GM13976 (cell line): ENCODE measurements at regions of chr7 and their contacts with region 1.

Region 1: GRCh38 chr7:130010689-130011412 is 40.3 kb downstream of the ZC3HC1 start:
- DNase-seq: peak; percentile 84
- CTCF ChIP-seq: peak; percentile 80

Region 2: DNA sequence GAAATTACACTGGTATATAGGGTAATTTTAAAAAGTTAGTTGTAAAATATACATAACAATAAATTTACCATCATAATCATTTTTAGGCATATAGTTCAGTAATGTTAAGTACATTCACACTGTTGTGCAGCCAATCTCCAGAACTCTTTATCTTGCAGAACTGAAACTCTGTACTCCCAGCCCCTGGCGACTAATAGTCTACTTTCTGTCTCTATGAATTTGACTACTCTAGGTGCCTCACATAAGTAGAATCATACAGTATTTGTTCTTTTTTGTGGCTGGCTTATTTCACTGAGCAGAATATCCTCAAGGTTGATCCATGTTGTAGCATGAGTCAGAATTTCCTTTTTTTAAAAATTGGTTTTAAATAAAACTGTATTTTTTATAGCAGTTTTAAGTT is 357.9 kb before region 1 on chr7:
- in situ Hi-C with region 1: loop called (anchors 10 kb)
- DNase-seq: no peak
- CTCF ChIP-seq: no peak

Region 3: GRCh38 chr7:129684777-129685176 is 326.1 kb before region 1 on chr7:
- in situ Hi-C with region 1: no loop called
- DNase-seq: no peak
- CTCF ChIP-seq: no peak

Region 4: DNA sequence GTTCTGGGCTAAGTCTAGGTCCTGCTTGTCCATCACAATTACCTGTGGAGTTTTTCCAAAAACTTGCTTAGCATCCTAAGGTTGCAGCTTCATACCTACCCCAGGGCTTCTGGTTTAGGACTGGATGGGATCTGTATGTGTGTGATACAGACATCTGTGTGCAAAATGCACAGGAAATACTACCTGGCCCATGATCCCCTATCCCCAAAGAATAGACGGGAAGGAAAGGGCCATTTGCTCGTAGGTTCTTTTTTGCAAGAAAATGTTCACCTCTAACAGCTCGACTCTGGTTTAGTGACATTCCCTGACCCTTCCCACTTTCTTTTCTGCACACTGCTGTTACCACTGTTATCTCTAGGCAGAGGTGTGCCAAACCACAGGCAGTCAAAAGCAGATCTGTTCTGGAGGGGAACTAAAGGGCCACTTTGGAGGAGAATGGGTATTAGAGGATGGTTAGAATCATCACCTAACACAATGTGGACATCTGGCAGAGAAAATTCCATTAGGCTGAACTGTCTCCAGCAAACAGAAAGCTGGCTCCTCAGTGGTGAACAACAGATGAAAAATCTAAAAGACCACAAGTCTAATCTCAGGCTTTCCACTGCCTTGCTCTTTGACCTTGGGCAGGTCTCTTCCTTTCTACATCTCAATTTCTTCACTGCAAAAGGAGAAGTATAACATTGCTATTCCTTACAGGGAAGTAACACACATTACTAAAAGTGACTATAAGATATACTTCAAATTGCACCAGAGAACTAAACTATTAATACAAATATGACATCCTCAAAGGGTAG is 165.5 kb before region 1 on chr7:
- in situ Hi-C with region 1: loop called (anchors 10 kb)
- DNase-seq: no peak
- CTCF ChIP-seq: no peak

Region 5: DNA sequence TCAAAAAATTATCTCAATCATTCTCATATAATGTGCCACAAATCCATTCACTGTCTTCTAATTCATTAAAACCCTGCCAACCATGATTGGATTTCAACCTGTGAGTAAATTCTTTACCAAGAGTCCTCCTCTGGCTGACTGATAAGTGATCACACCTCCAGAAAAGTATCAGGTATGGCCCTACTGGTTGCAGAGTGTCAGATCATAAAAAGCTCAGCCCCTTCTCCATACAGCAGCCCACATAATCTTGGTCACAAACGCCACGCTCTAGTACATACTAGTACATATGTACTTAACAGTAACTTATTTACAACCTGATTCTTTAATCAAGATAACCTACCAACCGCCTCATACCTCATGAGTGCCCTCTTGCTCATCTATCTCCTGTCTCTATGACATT is 84.2 kb before region 1 on chr7:
- in situ Hi-C with region 1: no loop called
- DNase-seq: no peak
- CTCF ChIP-seq: no peak

Region 6: DNA sequence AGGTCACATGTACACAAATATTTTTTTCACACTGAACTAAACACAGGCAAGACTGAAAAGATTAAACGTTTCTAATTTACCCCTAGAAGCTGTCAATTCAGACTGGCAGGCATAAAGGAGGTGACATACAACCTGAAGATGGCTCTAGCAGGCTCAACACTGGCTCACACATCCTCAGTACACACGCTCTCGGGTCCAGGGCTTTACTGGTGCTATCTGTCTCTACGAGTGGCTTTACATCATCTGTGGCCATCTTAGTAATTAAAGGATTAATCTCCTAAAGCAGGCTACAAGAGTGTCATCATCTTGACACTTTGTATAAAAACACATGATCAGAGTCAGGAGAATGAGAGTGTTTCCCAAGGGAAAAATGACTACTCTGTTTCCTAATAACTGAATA is 600.4 kb after region 1 on chr7:
- in situ Hi-C with region 1: no loop called
- DNase-seq: no peak
- CTCF ChIP-seq: no peak